IMR-90 (cell line): ENCODE measurements at regions of chr17 and their contacts with region 1.

Region 1: GRCh38 chr17:67376737-67377487 is at the start of gene PITPNC1:
- DNase-seq: peak; percentile 86
- ATAC-seq: peak; percentile 83
- H3K4me3 ChIP-seq: peak within 1 kb of the TSS; percentile 59
- H3K27ac ChIP-seq: peak within 1 kb of the TSS; percentile 47
- H3K4me1 ChIP-seq: peaks cover 5% of the 10 kb centered on the region; the same call in 1 of the 2 replicates
- H3K27me3 ChIP-seq: no peaks in the 10 kb centered on the region
- CTCF ChIP-seq: 0 out of 2 replicates have a peak, but pooled peaks have one; percentile 7
- POLR2A ChIP-seq: peak; percentile 92
- RAD21 ChIP-seq: no peak
- total RNA-seq, gene PITPNC1: 4.1 and 5.0 TPM in 2 replicates

Region 2: GRCh38 chr17:67475236-67475937 is 98.5 kb after region 1 on chr17:
- CTCF ChIA-PET with region 1: interaction called, 8 read pairs
- POLR2A ChIA-PET with region 1: no interaction called
- dilution Hi-C with region 1: no loop called
- in situ Hi-C with region 1: no loop called
- intact Hi-C with region 1: loop called (anchors 1 kb)
- DNase-seq: peak; percentile 72
- ATAC-seq: peak; percentile 92
- H3K4me3 ChIP-seq: no peak overlapping the region
- H3K27ac ChIP-seq: no peak overlapping the region
- H3K4me1 ChIP-seq: peaks cover 4% of the 10 kb centered on the region; the same call in 1 of the 2 replicates
- H3K27me3 ChIP-seq: no peaks in the 10 kb centered on the region
- CTCF ChIP-seq: peak; percentile 86
- POLR2A ChIP-seq: no peak
- RAD21 ChIP-seq: peak; percentile 85

Region 3: DNA sequence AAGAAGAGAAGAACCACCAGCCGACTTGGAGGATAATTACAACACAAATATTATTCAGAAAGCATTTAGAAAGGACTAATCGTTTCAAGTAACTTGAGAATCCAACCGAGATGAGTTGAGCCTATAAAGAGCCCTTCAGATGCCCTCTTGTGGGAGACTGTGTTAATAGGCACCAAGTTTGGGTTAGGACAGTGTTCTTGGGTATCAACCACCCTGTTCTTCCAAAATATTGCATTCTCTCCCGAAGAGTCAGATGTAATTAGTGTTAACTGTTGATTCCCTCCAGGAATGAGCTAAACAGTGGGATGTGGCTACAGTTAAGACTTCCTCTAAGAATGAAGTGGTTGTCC is 253.0 kb after region 1 on chr17:
- CTCF ChIA-PET with region 1: interaction called, 5 read pairs
- POLR2A ChIA-PET with region 1: no interaction called
- dilution Hi-C with region 1: no loop called
- in situ Hi-C with region 1: no loop called
- intact Hi-C with region 1: loop called (anchors 2 kb)
- DNase-seq: peak; percentile 75
- ATAC-seq: peak; percentile 91
- H3K4me3 ChIP-seq: no peak overlapping the region
- H3K27ac ChIP-seq: no peak overlapping the region
- H3K4me1 ChIP-seq: no peaks in the 10 kb centered on the region
- H3K27me3 ChIP-seq: no peaks in the 10 kb centered on the region
- CTCF ChIP-seq: peak; percentile 62
- POLR2A ChIP-seq: no peak
- RAD21 ChIP-seq: peak; percentile 64

Region 4: GRCh38 chr17:67689534-67690177 is 312.7 kb after region 1 on chr17:
- CTCF ChIA-PET with region 1: interaction called, 9 read pairs
- POLR2A ChIA-PET with region 1: no interaction called
- dilution Hi-C with region 1: no loop called
- in situ Hi-C with region 1: loop called (anchors 5 kb)
- intact Hi-C with region 1: loop called (anchors 1 kb)
- DNase-seq: peak; percentile 66
- ATAC-seq: peak; percentile 86
- H3K4me3 ChIP-seq: no peak overlapping the region
- H3K27ac ChIP-seq: no peak overlapping the region
- H3K4me1 ChIP-seq: no peaks in the 10 kb centered on the region
- H3K27me3 ChIP-seq: no peaks in the 10 kb centered on the region
- CTCF ChIP-seq: peak; percentile 85
- POLR2A ChIP-seq: no peak; the same call in 1 of the 2 replicates
- RAD21 ChIP-seq: peak; percentile 71